Ovary (tissue), 10 donors: ENCODE measurements at regions of chr9 and their contacts with region 1.

Region 1: DNA sequence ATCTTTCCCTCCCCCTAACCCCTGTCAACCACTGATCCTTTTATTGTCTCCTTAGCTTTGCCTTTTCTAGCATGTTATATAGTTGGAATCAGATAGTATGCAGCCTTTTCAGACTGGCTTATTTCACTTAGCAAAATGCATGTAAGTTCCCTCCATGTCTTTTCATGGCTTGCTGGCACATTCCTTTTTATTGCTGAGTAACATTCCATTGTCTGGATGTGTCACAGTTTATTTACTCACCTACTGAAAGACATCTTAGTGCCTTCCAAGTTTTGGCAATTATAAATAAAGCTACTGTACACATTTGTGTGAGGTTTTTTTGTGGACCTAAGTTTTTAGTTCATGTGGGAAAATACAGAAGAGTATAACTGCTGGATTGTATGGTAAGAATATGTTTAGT is 230.1 kb downstream of the PBX3 start:
- DNase-seq: no peak
- H3K4me3 ChIP-seq: no peak overlapping the region
- H3K27ac ChIP-seq: no peak overlapping the region
- H3K4me1 ChIP-seq: no peaks in the 10 kb centered on the region
- H3K27me3 ChIP-seq: no peaks in the 10 kb centered on the region
- CTCF ChIP-seq: no peak
- EP300 ChIP-seq: no peak
- POLR2A ChIP-seq: no peak

Region 2: DNA sequence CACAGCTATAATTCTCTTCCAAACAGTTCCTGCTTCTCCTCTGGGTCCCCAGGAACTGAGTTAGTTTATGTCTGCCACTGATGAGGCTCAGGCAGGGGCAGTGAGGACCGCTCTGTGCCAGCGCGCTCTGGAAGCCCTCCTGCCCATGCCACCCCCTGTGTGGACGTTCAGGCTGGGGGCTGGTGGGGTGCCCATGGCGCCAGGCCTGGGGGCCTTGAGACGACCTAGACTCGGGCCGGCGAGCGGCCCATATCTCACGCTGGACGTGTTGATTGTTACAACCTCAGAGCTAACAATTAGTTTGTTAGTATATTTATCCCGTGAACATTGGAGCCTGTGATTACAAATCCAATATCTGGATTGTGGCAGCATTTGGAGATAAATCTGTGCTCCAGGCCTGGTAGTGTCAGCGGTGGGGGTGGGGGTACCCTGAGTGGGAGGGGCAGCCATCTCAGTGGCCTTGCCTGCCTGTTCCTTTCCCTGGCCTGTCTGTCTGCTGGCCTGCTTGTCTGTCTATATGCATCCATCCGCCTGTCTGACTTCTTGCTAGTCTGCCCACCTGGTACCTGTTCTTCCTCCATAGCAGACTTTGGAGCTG is 92.9 kb after region 1 on chr9:
- intact Hi-C with region 1: loop called in 1 of 4 experiments (anchors 5 kb)
- DNase-seq: no peak
- H3K4me3 ChIP-seq: no peak overlapping the region
- H3K27ac ChIP-seq: no peak overlapping the region
- H3K4me1 ChIP-seq: no peaks in the 10 kb centered on the region
- H3K27me3 ChIP-seq: no peaks in the 10 kb centered on the region
- CTCF ChIP-seq: no peak
- EP300 ChIP-seq: no peak
- POLR2A ChIP-seq: no peak

Region 3: DNA sequence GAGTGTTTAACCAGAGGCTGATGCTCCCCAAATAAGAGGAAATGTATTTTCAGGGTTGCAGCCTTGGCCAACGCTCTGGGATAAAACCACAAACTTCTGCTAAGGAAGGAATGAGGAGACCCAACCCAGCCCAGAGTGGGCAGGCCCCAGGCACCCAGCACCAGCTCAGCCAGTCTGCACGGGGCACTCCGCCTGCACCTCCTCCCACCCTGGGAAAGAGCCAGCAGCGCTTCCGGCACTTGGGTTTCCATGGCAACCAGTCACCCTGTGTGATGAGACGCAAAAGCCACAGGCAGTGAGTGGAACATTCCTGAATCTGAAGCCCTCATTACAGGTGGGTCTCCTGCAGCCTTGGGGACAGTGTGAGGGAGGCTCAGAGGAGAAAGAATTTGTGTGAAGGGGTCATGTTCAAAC is 742.4 kb after region 1 on chr9:
- intact Hi-C with region 1: no loop called
- DNase-seq: no peak
- H3K4me3 ChIP-seq: no peak overlapping the region
- H3K27ac ChIP-seq: no peak overlapping the region
- H3K4me1 ChIP-seq: peaks cover 2% of the 10 kb centered on the region
- H3K27me3 ChIP-seq: no peaks in the 10 kb centered on the region
- CTCF ChIP-seq: no peak
- EP300 ChIP-seq: no peak
- POLR2A ChIP-seq: no peak